Activated CD4-positive, alpha-beta T cell treated with anti-CD3 and anti-CD28 coated beads for 36 hours (primary cell): ENCODE measurements at regions of chr2 and their contacts with region 1.

Region 1: GRCh38 chr2:237434866-237435311 is 20.9 kb upstream of the COL6A3 start:
- DNase-seq: peak; percentile 91
- ATAC-seq: peak; percentile 38
- H3K4me3 Mint-ChIP-seq: peak overlapping the region; percentile 74
- H3K27ac Mint-ChIP-seq: peak overlapping the region; percentile 95
- H3K4me1 Mint-ChIP-seq: peaks cover 97% of the 10 kb centered on the region
- H3K27me3 Mint-ChIP-seq: no peaks in the 10 kb centered on the region

Region 2: GRCh38 chr2:236550701-236551465 is 884.0 kb before region 1 on chr2:
- CTCF ChIA-PET with region 1: no interaction called
- POLR2A ChIA-PET with region 1: no interaction called
- intact Hi-C with region 1: loop called (anchors 5 to 10 kb)
- DNase-seq: peak; percentile 69
- ATAC-seq: peak; percentile 17
- H3K4me3 Mint-ChIP-seq: no peak overlapping the region
- H3K27ac Mint-ChIP-seq: no peak overlapping the region
- H3K4me1 Mint-ChIP-seq: peaks cover 97% of the 10 kb centered on the region
- H3K27me3 Mint-ChIP-seq: no peaks in the 10 kb centered on the region

Region 3: DNA sequence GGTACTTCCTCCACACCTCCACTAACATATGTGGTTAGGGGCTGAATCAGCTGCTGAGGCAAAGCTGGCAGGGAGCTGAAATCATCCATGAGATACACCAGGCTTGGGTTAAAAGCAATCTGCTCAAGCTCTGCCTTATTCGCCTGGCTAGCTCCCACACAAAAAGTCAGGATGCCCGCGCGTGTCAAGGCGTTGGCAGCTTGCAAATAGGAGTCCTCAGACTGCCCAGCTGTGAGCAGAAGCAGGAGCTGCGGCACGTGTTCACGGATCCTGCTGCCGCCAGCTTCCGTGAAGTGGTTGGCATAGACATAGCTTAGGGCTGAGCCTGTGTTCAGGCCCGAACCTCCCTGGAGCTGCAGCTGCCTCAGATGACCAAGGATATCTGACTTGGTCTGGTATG is 56.2 kb before region 1 on chr2:
- CTCF ChIA-PET with region 1: no interaction called
- POLR2A ChIA-PET with region 1: no interaction called
- intact Hi-C with region 1: no loop called
- DNase-seq: no peak
- ATAC-seq: no peak
- H3K4me3 Mint-ChIP-seq: no peak overlapping the region
- H3K27ac Mint-ChIP-seq: no peak overlapping the region
- H3K4me1 Mint-ChIP-seq: no peaks in the 10 kb centered on the region
- H3K27me3 Mint-ChIP-seq: no peaks in the 10 kb centered on the region

Region 4: GRCh38 chr2:237421542-237422116 is 13.3 kb before region 1 on chr2:
- CTCF ChIA-PET with region 1: interaction called, 70 read pairs
- POLR2A ChIA-PET with region 1: interaction called, 4 read pairs
- intact Hi-C with region 1: no loop called
- DNase-seq: peak; percentile 90
- ATAC-seq: peak; percentile 95
- H3K4me3 Mint-ChIP-seq: peak overlapping the region; percentile 50
- H3K27ac Mint-ChIP-seq: peak overlapping the region; percentile 83
- H3K4me1 Mint-ChIP-seq: peaks cover 45% of the 10 kb centered on the region
- H3K27me3 Mint-ChIP-seq: peaks cover 4% of the 10 kb centered on the region

Region 5: GRCh38 chr2:237500681-237501424 is 66.0 kb after region 1 on chr2:
- CTCF ChIA-PET with region 1: no interaction called
- POLR2A ChIA-PET with region 1: no interaction called
- intact Hi-C with region 1: no loop called
- DNase-seq: no peak
- ATAC-seq: peak; percentile 51
- H3K4me3 Mint-ChIP-seq: no peak overlapping the region
- H3K27ac Mint-ChIP-seq: no peak overlapping the region
- H3K4me1 Mint-ChIP-seq: peaks cover 3% of the 10 kb centered on the region
- H3K27me3 Mint-ChIP-seq: peaks cover 22% of the 10 kb centered on the region